Calu3 (cell line): ENCODE measurements at regions of chr22 and their contacts with region 1.

Region 1: DNA sequence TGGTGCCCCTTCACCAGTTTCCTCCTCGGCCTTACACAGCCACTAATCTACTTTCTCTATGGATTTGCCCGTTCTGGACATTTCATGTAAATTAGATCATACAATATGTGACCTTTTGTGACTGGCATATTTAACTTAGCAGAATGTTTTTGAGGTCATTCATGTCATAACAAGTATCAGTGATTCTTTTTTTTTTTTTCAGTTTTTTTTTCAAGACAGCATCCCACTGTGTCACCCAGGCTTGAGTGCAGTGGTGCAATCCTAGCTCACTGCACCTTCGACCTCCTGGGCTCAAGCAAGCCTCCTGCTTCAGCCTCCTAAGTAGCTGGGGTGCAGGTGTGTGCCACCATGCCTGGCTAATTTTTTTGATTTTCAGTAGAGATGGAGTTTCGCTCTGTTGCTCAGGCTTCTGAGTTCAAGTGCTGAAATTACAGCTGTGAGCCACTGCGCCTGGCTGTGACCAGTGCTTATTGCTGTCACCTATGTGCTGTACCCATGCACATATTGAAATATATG is 22.7 kb downstream of the KIAA1671 start:
- DNase-seq: no peak
- H3K4me3 Mint-ChIP-seq: no peak overlapping the region
- H3K27ac Mint-ChIP-seq: no peak overlapping the region
- H3K4me1 Mint-ChIP-seq: peaks cover 14% of the 10 kb centered on the region
- H3K27me3 Mint-ChIP-seq: no peaks in the 10 kb centered on the region
- CTCF ChIP-seq: no peak

Region 2: GRCh38 chr22:24761888-24762675 is 213.1 kb before region 1 on chr22:
- CTCF ChIA-PET with region 1: no interaction called
- intact Hi-C with region 1: no loop called
- DNase-seq: no peak
- H3K4me3 Mint-ChIP-seq: no peak overlapping the region
- H3K27ac Mint-ChIP-seq: no peak overlapping the region
- H3K4me1 Mint-ChIP-seq: no peaks in the 10 kb centered on the region
- H3K27me3 Mint-ChIP-seq: no peaks in the 10 kb centered on the region
- CTCF ChIP-seq: no peak

Region 3: DNA sequence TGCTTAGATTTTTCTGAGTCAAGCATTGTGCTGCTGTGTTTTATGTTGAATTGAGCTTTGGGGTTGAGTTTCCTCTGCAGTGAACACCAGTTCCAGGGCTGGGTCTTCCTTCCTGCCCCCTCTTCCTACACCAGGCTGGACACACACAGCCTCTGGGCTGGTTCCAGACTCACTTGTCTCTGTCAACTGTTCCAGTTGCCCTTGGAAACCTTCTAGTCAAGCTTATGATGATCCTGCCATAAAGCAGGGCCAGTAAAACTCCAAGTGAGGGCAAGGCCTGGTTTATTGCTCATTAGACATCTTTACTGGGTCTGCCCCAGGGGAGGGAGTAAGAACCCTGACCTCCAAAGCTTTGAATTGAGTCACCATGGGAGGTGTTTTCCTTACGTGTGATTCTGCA is 38.4 kb after region 1 on chr22:
- CTCF ChIA-PET with region 1: no interaction called
- intact Hi-C with region 1: no loop called
- DNase-seq: no peak
- H3K4me3 Mint-ChIP-seq: no peak overlapping the region
- H3K27ac Mint-ChIP-seq: no peak overlapping the region
- H3K4me1 Mint-ChIP-seq: no peaks in the 10 kb centered on the region
- H3K27me3 Mint-ChIP-seq: no peaks in the 10 kb centered on the region
- CTCF ChIP-seq: no peak

Region 4: GRCh38 chr22:25027959-25028840 is 53.0 kb after region 1 on chr22:
- CTCF ChIA-PET with region 1: interaction called, 10 read pairs
- intact Hi-C with region 1: no loop called
- DNase-seq: peak; percentile 38
- H3K4me3 Mint-ChIP-seq: no peak overlapping the region
- H3K27ac Mint-ChIP-seq: no peak overlapping the region
- H3K4me1 Mint-ChIP-seq: peaks cover 41% of the 10 kb centered on the region
- H3K27me3 Mint-ChIP-seq: no peaks in the 10 kb centered on the region
- CTCF ChIP-seq: no peak